AG04450 (cell line): ENCODE measurements at regions of chr2 and their contacts with region 1.

Region 1: DNA sequence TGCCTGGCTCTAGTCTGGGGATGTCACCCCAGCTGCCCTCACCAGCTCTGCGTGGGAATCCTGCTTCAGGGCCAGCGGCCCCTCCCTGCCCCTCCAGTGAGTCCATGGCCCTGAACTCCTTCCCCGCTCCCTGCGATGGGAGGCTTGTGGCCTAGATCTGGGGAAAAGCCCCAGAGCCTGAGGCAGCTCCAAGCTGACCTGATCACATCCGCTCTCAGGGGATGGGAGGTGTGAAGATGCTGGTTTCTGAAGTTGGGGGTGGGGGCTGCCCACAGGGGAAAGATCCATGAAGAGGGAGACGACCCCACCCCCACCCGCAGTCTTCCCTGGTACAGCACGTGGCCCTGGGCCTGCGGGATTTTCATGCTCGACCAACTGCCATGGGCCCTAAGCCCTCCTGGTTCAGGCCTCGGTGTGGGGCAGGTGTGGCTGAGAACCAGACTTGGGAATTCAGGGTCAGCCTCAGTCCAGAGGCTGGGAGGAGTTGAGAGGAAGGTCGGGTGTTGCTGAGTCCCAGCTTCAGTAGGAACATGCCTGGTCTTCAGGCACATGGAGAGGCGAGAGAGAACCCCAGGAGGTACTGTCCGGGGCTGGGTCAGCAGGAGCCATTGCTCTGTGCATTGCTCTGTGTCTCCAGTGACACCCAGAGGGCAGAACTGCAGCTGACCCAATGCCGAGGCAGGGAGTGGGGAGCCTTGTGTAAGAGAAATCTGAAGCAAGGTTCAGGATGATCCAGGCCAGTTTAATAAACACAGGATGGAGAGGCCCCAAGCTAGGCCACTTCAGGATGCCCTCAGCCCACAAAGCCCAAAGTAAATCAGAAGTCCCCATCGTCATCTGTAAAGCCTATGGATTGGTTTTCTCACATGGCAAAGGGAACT is 115.1 kb downstream of the CAPN13 start:
- DNase-seq: no peak
- H3K4me3 ChIP-seq: no peak overlapping the region
- H3K27ac ChIP-seq: no peak overlapping the region
- H3K27me3 ChIP-seq: no peaks in the 10 kb centered on the region
- CTCF ChIP-seq: peak; percentile 7; the same call in 1 of the 2 replicates

Region 2: GRCh38 chr2:32010670-32011484 is 1318.7 kb after region 1 on chr2 and contains the start of gene MEMO1:
- CTCF ChIA-PET with region 1: no interaction called
- POLR2A ChIA-PET with region 1: interaction called, 11 read pairs
- DNase-seq: peak; percentile 88
- H3K4me3 ChIP-seq: peak within 1 kb of the TSS; percentile 84
- H3K27ac ChIP-seq: peak within 1 kb of the TSS; percentile 88
- H3K27me3 ChIP-seq: no peaks in the 10 kb centered on the region
- CTCF ChIP-seq: no peak; the same call in 1 of the 2 replicates
- polyA plus RNA-seq, gene MEMO1: 54.7 and 64.5 TPM in 2 replicates